AG04450 (cell line): ENCODE measurements at regions of chr15 and their contacts with region 1.

Region 1: GRCh38 chr15:93087825-93088199 is 1.2 kb downstream of the RGMA start:
- DNase-seq: no peak
- H3K4me3 ChIP-seq: no peak overlapping the region; the same call in 1 of the 2 replicates
- H3K27ac ChIP-seq: no peak overlapping the region
- H3K27me3 ChIP-seq: peaks cover 60% of the 10 kb centered on the region
- CTCF ChIP-seq: peak; percentile 74

Region 2: GRCh38 chr15:92326236-92326635 is 761.6 kb before region 1 on chr15:
- CTCF ChIA-PET with region 1: interaction called, 10 read pairs
- POLR2A ChIA-PET with region 1: no interaction called
- DNase-seq: no peak
- H3K4me3 ChIP-seq: no peak overlapping the region
- H3K27ac ChIP-seq: no peak overlapping the region
- H3K27me3 ChIP-seq: no peaks in the 10 kb centered on the region
- CTCF ChIP-seq: no peak

Region 3: DNA sequence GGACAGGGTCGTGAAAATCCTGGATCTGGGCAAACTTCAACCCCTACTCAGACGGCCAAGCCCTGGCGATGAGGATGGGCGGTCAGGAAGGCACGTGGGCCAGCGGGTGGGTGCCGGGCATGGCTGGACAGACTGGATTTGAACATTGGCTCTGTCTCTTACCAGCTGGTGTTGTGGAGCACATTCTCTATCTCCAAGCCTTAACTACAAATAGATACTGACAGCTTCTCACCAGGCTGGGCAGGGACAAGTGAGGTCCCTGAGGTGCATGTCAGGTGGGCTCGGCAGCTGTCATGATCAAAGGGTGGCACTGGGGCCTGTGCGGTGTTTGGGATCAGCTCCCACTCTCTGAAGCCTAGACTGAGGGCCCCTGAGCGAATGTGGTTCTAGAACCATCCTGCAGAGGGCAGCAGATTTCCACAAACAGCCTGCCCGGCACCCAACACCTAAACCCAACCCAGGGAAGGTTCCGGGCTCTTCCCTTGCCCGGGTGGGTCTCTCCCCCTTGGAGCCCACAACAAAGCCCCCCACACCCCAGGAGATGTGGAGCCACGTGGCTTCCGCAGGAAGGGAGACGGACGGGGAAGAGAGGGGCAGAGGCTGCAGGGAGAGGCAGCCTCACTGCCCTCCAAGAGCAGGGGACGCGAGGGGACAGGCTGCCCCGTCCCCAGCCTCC is 57.2 kb before region 1 on chr15:
- CTCF ChIA-PET with region 1: interaction called, 14 read pairs
- POLR2A ChIA-PET with region 1: no interaction called
- DNase-seq: peak; percentile 26
- H3K4me3 ChIP-seq: no peak overlapping the region
- H3K27ac ChIP-seq: peak overlapping the region; percentile 11
- H3K27me3 ChIP-seq: no peaks in the 10 kb centered on the region
- CTCF ChIP-seq: peak; percentile 84

Region 4: GRCh38 chr15:93035953-93036800 is 51.6 kb before region 1 on chr15:
- CTCF ChIA-PET with region 1: interaction called, 10 read pairs
- POLR2A ChIA-PET with region 1: no interaction called
- DNase-seq: no peak
- H3K4me3 ChIP-seq: no peak overlapping the region
- H3K27ac ChIP-seq: no peak overlapping the region
- H3K27me3 ChIP-seq: no peaks in the 10 kb centered on the region
- CTCF ChIP-seq: peak; percentile 59

Region 5: DNA sequence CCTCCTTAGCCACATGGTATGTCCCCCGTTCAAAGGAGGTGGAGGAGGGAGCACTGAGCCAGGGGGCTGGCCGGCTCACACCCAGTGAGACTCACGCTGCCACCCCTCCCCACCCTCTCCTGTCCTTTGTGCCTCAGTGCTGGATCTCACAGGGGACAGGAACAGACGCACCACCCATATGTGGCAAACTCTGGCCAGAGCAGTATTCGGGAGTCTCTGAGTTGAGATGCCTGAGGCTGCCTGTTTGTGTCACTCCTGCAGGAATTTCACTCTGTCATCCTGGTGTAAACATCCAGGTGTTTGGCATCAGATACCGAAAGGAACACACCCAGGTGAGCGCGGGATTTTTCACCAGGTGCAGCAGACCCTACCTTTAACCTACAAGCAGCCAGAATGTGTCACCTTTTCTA is 24.5 kb before region 1 on chr15:
- CTCF ChIA-PET with region 1: interaction called, 12 read pairs
- POLR2A ChIA-PET with region 1: no interaction called
- DNase-seq: no peak
- H3K4me3 ChIP-seq: no peak overlapping the region
- H3K27ac ChIP-seq: no peak overlapping the region
- H3K27me3 ChIP-seq: peaks cover 5% of the 10 kb centered on the region
- CTCF ChIP-seq: no peak

Region 6: DNA sequence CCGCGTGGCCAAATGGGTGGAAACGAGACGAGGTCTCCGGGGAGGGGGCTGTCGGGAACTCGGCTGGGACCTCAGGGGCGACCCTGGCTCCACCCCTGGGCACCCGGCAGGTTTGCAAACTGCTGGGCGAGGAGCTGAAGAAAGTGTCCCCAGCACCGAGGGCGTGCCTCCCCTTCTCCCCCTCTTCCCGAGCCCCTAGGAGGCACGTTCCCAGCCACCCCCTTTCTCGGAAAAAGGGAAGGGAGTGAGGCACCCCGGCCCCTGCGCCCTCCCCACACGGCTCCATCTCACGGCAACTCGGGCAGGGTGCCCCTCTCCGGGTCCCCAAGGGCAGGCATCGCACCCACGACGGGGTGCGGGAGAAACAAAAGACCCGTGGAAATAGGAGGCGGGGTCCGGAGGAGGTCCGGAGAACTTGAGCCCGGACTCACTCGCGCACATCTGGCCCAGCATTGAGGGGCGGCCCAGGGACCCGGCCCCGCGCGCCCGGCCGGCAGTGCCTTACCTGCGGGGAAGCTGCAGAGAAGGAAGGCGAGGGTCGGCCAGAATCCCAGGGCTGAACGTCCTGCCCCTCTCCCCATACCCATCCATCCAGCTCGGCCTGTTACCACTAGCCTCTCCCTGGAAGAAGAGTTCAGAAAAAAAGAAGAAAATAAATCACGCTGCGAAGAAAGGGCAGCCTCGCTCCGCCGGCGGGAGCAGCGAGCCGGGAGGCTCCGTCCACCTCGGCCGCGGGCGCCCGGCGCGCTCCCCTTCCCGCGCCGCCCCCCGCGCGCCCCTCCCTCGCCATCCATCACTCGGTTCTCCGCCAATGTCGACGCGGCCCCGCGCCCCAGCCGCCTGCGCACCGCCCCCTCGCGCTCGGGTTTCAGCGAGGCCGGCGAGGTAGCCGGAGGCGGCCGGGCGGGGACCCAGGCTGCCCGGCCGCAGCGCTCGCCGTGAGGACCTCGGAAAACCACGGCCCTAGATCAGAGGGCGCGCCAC is 15.1 kb before region 1 on chr15:
- CTCF ChIA-PET with region 1: interaction called, 21 read pairs
- POLR2A ChIA-PET with region 1: no interaction called
- DNase-seq: no peak
- H3K4me3 ChIP-seq: peak overlapping the region; percentile 66
- H3K27ac ChIP-seq: no peak overlapping the region
- H3K27me3 ChIP-seq: peaks cover 42% of the 10 kb centered on the region
- CTCF ChIP-seq: no peak

Region 7: GRCh38 chr15:93179072-93179471 is 91.3 kb after region 1 on chr15:
- CTCF ChIA-PET with region 1: no interaction called
- POLR2A ChIA-PET with region 1: no interaction called
- DNase-seq: no peak
- H3K4me3 ChIP-seq: no peak overlapping the region
- H3K27ac ChIP-seq: no peak overlapping the region
- H3K27me3 ChIP-seq: no peaks in the 10 kb centered on the region
- CTCF ChIP-seq: no peak